Breast epithelium (tissue), 4 donors: ENCODE measurements at regions of chr3 and their contacts with region 1.

Region 1: DNA sequence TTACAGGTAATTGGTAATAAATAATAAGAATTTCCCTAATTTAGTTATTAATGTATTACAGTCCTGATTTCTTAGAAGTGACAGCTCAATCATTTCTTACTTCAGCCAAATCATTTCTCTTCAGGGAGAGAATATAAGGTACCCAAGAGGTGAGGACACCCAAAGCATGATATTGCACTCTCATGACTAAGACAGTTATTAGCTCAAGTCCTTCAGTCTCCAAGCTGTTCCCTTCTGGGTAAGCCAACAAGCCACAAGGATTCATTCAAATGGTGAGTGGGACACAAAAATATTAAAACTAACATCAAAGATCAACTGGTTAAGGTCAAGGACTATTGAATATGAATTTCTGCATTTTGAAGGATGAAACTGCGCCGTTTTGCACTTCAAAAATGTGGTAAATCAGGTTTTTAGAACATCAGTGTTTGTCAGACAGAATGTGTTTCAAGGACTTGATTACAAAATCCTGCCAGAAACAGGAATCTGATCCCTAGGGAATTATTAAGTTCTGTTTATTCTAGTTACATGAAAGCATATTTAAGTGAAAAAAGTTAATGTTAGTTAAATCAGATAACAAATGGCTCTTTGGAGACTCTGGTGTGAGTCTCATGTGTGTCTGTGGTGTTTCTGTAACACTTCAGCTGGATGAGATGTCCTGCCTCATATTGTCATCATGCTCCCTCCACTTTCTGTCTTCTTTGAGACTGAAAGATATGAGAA is 101.7 kb upstream of the COL8A1 start:
- DNase-seq: no peak
- H3K4me3 ChIP-seq: no peak overlapping the region
- H3K27ac ChIP-seq: no peak overlapping the region
- H3K4me1 ChIP-seq: no peaks in the 10 kb centered on the region
- H3K27me3 ChIP-seq: no peaks in the 10 kb centered on the region
- CTCF ChIP-seq: no peak
- POLR2A ChIP-seq: no peak

Region 2: GRCh38 chr3:99523431-99524127 is 13.1 kb before region 1 on chr3:
- intact Hi-C with region 1: loop called (anchors 2 kb)
- DNase-seq: no peak
- H3K4me3 ChIP-seq: no peak overlapping the region
- H3K27ac ChIP-seq: no peak overlapping the region
- H3K4me1 ChIP-seq: no peaks in the 10 kb centered on the region
- H3K27me3 ChIP-seq: no peaks in the 10 kb centered on the region
- CTCF ChIP-seq: no peak
- POLR2A ChIP-seq: no peak

Region 3: GRCh38 chr3:100454677-100455076 is 918.0 kb after region 1 on chr3:
- intact Hi-C with region 1: no loop called
- DNase-seq: no peak
- H3K4me3 ChIP-seq: no peak overlapping the region
- H3K27ac ChIP-seq: no peak overlapping the region
- H3K4me1 ChIP-seq: no peaks in the 10 kb centered on the region
- H3K27me3 ChIP-seq: no peaks in the 10 kb centered on the region
- CTCF ChIP-seq: no peak
- POLR2A ChIP-seq: no peak